PC-3 (cell line): ENCODE measurements at regions of chr17 and their contacts with region 1.

Region 1: DNA sequence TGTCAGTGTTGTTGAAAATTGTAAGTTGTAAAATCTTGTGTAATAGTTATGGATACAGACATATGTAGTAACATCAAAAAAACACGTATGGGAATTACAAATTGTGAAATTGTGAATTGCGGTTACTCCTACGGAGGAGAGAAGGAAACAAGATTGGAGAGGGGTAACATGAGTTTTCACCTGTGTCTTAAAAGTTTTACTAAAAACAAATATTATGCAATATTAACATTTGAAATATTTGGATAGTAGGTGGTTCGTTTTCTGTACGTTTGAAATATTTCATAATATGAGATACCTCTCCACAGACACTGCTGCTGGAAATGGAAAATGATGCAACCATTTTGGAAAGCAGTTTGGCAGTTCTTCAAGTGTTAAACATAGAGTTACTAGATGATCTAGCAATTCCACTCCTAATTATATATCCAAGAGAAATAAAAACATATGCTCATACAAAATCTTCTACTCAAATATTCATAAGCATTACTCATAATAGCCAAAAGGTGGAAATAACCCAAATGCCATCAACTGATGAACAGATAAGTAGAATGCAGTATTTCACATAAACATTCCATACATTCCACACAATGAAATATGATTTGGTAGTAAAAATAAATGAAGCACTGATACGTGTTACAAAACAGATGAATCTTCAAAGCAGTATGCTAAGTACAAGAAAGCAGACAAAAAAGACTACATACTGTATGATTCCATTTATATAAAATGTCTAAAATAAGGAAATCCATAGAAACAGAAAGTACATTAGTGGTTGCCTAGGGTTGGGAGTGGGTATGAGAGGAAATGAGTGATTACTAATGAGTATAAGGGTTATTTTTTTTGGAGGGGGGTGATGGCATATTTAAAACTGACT is 40.7 kb upstream of the ABCA10 start:
- DNase-seq: peak; percentile 95
- ATAC-seq: peak; percentile 89
- H3K4me3 ChIP-seq: peak overlapping the region; percentile 49
- H3K27ac ChIP-seq: peak overlapping the region; percentile 52
- H3K4me1 ChIP-seq: peaks cover 36% of the 10 kb centered on the region
- H3K27me3 ChIP-seq: no peaks in the 10 kb centered on the region
- CTCF ChIP-seq: no peak

Region 2: DNA sequence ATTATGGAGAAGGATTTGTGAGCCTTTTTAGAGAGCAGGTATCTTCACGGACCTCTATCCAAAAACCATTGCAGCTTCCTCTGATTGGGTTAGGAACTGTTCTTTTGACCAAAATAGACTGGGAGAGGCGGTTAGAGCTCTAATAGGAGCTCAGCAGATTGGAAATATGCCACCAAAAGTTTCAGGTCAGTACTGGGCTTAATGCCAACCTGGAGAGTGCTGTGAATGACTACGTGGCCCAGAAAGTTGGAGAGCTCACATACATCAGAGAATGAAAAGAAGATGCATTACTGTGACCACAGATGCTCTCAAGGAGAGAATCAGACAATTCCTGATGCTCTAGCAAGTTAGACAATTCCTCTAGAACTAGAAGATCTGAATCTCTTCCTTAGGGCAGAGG is 400.7 kb before region 1 on chr17:
- CTCF ChIA-PET with region 1: no interaction called
- POLR2A ChIA-PET with region 1: no interaction called
- intact Hi-C with region 1: no loop called
- DNase-seq: peak; percentile 48
- ATAC-seq: peak; percentile 20; the same call in 1 of the 2 replicates
- H3K4me3 ChIP-seq: no peak overlapping the region
- H3K27ac ChIP-seq: no peak overlapping the region
- H3K4me1 ChIP-seq: no peaks in the 10 kb centered on the region
- H3K27me3 ChIP-seq: no peaks in the 10 kb centered on the region
- CTCF ChIP-seq: no peak

Region 3: DNA sequence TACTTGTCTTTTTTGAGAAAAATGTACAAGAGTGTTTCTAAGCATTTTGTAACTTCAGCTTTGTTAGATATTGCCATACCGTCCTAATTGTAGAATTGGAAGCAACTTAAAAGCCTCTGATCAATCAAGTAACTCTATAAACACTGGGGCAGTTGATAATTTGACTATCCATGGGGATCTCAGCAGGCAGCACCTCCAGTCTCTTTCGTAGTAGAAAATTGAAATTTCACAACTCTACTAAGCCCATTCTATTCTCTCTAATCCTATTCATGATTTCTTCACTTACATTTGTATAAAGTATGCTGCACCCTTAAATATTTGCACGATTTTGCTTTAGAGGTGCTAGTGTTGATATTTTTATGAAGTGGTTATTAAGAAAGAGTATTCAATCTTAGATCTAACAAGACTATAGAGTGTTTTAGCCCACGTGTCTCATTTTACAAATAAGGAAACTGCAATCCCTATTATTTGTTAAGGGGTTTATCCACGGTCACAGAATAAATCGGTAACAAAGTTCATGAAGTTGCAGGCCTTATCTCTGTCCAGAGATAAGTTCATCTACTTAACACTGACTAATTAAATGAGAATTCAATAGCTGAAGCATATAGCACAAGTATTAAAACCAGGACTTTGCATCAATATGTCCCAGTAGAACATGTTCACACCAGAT is 138.6 kb before region 1 on chr17:
- CTCF ChIA-PET with region 1: no interaction called
- POLR2A ChIA-PET with region 1: no interaction called
- intact Hi-C with region 1: no loop called
- DNase-seq: no peak
- ATAC-seq: no peak
- H3K4me3 ChIP-seq: no peak overlapping the region
- H3K27ac ChIP-seq: no peak overlapping the region
- H3K4me1 ChIP-seq: no peaks in the 10 kb centered on the region
- H3K27me3 ChIP-seq: peaks cover 51% of the 10 kb centered on the region
- CTCF ChIP-seq: no peak

Region 4: GRCh38 chr17:69287168-69287567 is 17.8 kb after region 1 on chr17:
- CTCF ChIA-PET with region 1: no interaction called
- POLR2A ChIA-PET with region 1: no interaction called
- intact Hi-C with region 1: loop called (anchors 1 kb)
- DNase-seq: peak; percentile 90
- ATAC-seq: peak; percentile 82
- H3K4me3 ChIP-seq: peak overlapping the region; percentile 14
- H3K27ac ChIP-seq: peak overlapping the region; percentile 52
- H3K4me1 ChIP-seq: peaks cover 29% of the 10 kb centered on the region
- H3K27me3 ChIP-seq: no peaks in the 10 kb centered on the region
- CTCF ChIP-seq: no peak

Region 5: GRCh38 chr17:69898601-69899000 is 629.2 kb after region 1 on chr17:
- CTCF ChIA-PET with region 1: no interaction called
- POLR2A ChIA-PET with region 1: no interaction called
- intact Hi-C with region 1: no loop called
- DNase-seq: no peak
- ATAC-seq: no peak
- H3K4me3 ChIP-seq: no peak overlapping the region
- H3K27ac ChIP-seq: no peak overlapping the region
- H3K4me1 ChIP-seq: 0 out of 2 replicates have a peak, but pooled peaks cover 5% of the 10 kb centered on the region
- H3K27me3 ChIP-seq: no peaks in the 10 kb centered on the region
- CTCF ChIP-seq: no peak